ENCODE measurements at regions of chr9 and their contacts with region 1.

Region 1: GRCh38 chr9:6055213-6055612 is 39.8 kb upstream of the RANBP6 start:
- DNase-seq: peak; percentile 53 to 65 (median 59)
- H3K4me3 ChIP-seq: no peak overlapping the region
- H3K4me3 Mint-ChIP-seq: no peak overlapping the region
- H3K27ac ChIP-seq: no peak overlapping the region
- H3K27ac Mint-ChIP-seq: no peak overlapping the region
- H3K4me1 ChIP-seq: no peaks in the 10 kb centered on the region
- H3K4me1 Mint-ChIP-seq: peaks cover 0 to 7% (median 2%) of the 10 kb centered on the region in 4 donors
- H3K27me3 ChIP-seq: no peaks in the 10 kb centered on the region
- H3K27me3 Mint-ChIP-seq: peaks cover 2 to 4% of the 10 kb centered on the region in 2 donors

Region 2: GRCh38 chr9:5799314-5799713 is 255.9 kb before region 1 on chr9:
- CTCF ChIA-PET with region 1: interaction called, 6 read pairs
- POLR2A ChIA-PET with region 1: no interaction called
- intact Hi-C with region 1: loop called (anchors 1 kb)
- DNase-seq: peak in 4 of 5 donors; percentile 3 to 15 (median 7)
- H3K4me3 ChIP-seq: no peak overlapping the region
- H3K4me3 Mint-ChIP-seq: no peak overlapping the region
- H3K27ac ChIP-seq: no peak overlapping the region
- H3K27ac Mint-ChIP-seq: peak overlapping the region in 2 of 7 donors; percentile 37 to 63
- H3K4me1 ChIP-seq: peaks cover 4% of the 10 kb centered on the region
- H3K4me1 Mint-ChIP-seq: peaks cover 12 to 22% (median 13%) of the 10 kb centered on the region in 4 donors
- H3K27me3 ChIP-seq: no peaks in the 10 kb centered on the region
- H3K27me3 Mint-ChIP-seq: no peaks in the 10 kb centered on the region

Region 3: GRCh38 chr9:6015278-6016157 is 39.7 kb before region 1 on chr9 and contains the start of gene RANBP6:
- CTCF ChIA-PET with region 1: interaction called, 8 read pairs
- POLR2A ChIA-PET with region 1: no interaction called
- intact Hi-C with region 1: loop called (anchors 2 kb)
- DNase-seq: peak; percentile 89 to 92 (median 90)
- H3K4me3 ChIP-seq: peak within 1 kb of the TSS; percentile 67 to 95
- H3K4me3 Mint-ChIP-seq: peak within 1 kb of the TSS; percentile 96 to 99 (median 97)
- H3K27ac ChIP-seq: peak within 1 kb of the TSS; percentile 70
- H3K27ac Mint-ChIP-seq: peak within 1 kb of the TSS; percentile 93 to 99 (median 98)
- H3K4me1 ChIP-seq: peaks cover 22% of the 10 kb centered on the region
- H3K4me1 Mint-ChIP-seq: peaks cover 23 to 47% (median 33%) of the 10 kb centered on the region in 4 donors
- H3K27me3 ChIP-seq: no peaks in the 10 kb centered on the region
- H3K27me3 Mint-ChIP-seq: no peaks in the 10 kb centered on the region
- total RNA-seq, gene RANBP6: 36.0 to 36.7 TPM

Region 4: GRCh38 chr9:6068983-6069382 is 13.8 kb after region 1 on chr9:
- CTCF ChIA-PET with region 1: interaction called, 20 read pairs
- POLR2A ChIA-PET with region 1: no interaction called
- intact Hi-C with region 1: no loop called
- DNase-seq: peak; percentile 55 to 76 (median 68)
- H3K4me3 ChIP-seq: peak overlapping the region in 1 of 2 donors; percentile 15
- H3K4me3 Mint-ChIP-seq: peak overlapping the region in 7 of 8 donors; percentile 33 to 79 (median 72)
- H3K27ac ChIP-seq: peak overlapping the region; percentile 1
- H3K27ac Mint-ChIP-seq: peak overlapping the region; percentile 50 to 98 (median 91)
- H3K4me1 ChIP-seq: peaks cover 17% of the 10 kb centered on the region
- H3K4me1 Mint-ChIP-seq: peaks cover 10 to 34% (median 16%) of the 10 kb centered on the region in 4 donors
- H3K27me3 ChIP-seq: no peaks in the 10 kb centered on the region
- H3K27me3 Mint-ChIP-seq: no peaks in the 10 kb centered on the region

Region 5: DNA sequence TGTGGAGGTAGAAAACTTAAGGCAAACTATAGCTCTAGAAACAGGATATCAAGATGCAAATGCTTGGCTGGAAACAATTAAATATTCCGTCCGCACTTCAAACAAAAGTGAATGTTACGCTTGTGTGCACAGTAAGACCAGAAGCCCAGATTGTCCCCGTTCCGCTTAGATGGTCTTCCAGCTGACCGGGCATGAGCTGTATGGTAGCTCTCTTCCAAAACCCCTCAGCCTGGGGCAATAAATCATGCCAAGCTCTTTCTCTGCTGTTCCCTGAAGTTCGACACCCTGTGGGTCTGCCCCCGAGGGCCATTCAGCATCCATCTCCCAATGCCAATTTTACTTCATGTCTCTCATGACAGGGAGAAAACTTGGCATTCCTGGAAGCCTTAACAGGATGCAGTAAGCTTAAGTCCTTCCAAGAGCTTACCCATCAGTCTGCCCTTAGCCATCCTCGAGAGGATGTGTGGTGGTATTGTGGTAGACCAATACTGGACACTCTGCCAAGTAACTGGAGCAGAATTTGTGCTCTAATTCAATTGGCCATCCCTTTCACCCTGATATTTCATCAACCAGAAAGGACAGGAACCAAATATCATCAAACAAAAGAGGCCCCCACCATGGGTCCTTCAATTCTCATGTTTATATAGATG is 30.9 kb after region 1 on chr9:
- CTCF ChIA-PET with region 1: no interaction called
- POLR2A ChIA-PET with region 1: no interaction called
- intact Hi-C with region 1: no loop called
- DNase-seq: no peak
- H3K4me3 ChIP-seq: no peak overlapping the region
- H3K4me3 Mint-ChIP-seq: no peak overlapping the region
- H3K27ac ChIP-seq: no peak overlapping the region
- H3K27ac Mint-ChIP-seq: no peak overlapping the region
- H3K4me1 ChIP-seq: no peaks in the 10 kb centered on the region
- H3K4me1 Mint-ChIP-seq: no peaks in the 10 kb centered on the region
- H3K27me3 ChIP-seq: no peaks in the 10 kb centered on the region
- H3K27me3 Mint-ChIP-seq: peaks cover 1 to 2% of the 10 kb centered on the region in 2 donors

Region 6: GRCh38 chr9:6353851-6354686 is 298.9 kb after region 1 on chr9:
- CTCF ChIA-PET with region 1: interaction called, 5 read pairs
- POLR2A ChIA-PET with region 1: no interaction called
- intact Hi-C with region 1: loop called (anchors 1 kb)
- DNase-seq: peak in 4 of 5 donors; percentile 51 to 66 (median 59)
- H3K4me3 ChIP-seq: no peak overlapping the region
- H3K4me3 Mint-ChIP-seq: no peak overlapping the region
- H3K27ac ChIP-seq: no peak overlapping the region
- H3K27ac Mint-ChIP-seq: no peak overlapping the region
- H3K4me1 ChIP-seq: no peaks in the 10 kb centered on the region
- H3K4me1 Mint-ChIP-seq: no peaks in the 10 kb centered on the region
- H3K27me3 ChIP-seq: no peaks in the 10 kb centered on the region
- H3K27me3 Mint-ChIP-seq: peaks cover 1 to 5% of the 10 kb centered on the region in 2 donors